PC-9 (cell line): ENCODE measurements at regions of chr17 and their contacts with region 1.

Region 1: DNA sequence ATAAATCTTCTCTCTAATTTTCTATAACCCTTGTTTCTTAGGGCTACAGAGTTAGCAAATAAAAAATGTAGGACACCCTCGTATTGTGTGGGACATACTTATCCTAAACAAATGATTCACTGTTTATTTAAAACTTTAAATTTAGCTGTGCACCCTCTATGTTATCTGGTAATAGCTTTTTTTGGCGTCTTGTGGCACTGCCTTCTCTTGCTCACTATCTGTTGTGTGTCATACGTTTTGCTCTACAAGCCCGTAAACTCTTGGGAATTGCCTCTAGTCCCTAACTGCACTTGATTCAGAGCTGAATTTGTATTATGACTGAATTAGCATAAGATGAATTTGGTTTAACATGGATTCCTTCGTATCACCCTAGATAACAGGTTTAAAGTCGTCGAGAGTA is 144.3 kb upstream of the MYOCD start:
- DNase-seq: no peak
- H3K4me3 ChIP-seq: no peak overlapping the region
- H3K27ac ChIP-seq: no peak overlapping the region
- H3K4me1 ChIP-seq: no peaks in the 10 kb centered on the region
- H3K27me3 ChIP-seq: no peaks in the 10 kb centered on the region
- CTCF ChIP-seq: no peak

Region 2: DNA sequence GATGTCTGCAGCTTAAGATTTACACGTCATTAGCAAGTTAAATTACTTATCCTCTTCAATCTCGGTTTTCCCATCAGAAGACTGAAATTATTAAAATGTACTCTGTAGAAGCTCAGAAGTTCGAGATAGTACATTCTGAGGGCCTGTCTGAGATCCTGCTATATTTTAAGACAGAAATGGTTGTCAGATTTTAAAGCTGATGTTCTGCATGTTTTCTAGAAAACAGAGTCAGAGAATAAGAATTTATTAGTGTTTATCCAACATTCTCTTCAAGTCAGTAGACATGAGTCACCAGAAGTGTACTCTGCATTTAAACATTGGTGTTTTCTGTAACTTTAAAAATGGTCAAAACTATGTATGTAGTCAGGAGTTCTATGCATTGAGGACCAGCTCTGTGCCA is 10.9 kb before region 1 on chr17:
- CTCF ChIA-PET with region 1: interaction called, 16 read pairs
- POLR2A ChIA-PET with region 1: no interaction called
- intact Hi-C with region 1: no loop called
- DNase-seq: no peak
- H3K4me3 ChIP-seq: no peak overlapping the region
- H3K27ac ChIP-seq: no peak overlapping the region
- H3K4me1 ChIP-seq: no peaks in the 10 kb centered on the region
- H3K27me3 ChIP-seq: no peaks in the 10 kb centered on the region; the same call in 1 of the 2 replicates
- CTCF ChIP-seq: no peak

Region 3: DNA sequence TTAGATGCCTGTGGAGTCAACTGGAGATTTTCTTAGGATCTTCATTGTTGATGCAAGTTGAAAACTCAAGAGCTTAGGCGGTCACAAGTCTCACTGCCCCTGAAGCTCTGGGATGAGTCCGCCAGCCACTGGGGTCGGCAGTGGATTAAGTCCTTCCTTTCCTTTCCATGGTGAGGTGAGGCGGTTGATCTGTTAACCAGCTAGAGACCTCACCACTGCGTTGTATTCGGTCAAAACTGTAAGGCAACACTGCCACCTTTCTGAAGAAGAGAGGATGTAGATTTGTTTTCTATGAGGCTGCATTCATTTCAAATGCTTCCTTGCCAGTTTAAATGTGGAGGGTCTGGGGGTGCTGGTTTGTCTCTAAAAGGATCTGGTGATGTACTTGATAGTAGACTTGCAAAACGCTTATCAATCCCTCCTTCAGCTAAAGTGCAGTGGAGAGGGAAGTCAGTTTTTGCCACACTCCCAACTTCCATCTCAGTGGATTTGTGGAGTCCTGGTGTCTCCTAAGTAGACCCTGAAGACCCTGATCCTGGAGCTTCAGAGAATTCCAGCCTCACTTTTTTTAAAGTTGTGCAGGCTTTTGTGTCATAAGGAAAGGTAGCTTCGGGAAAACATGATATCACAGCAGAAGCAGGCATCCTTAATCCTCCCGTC is 146.0 kb after region 1 on chr17:
- CTCF ChIA-PET with region 1: no interaction called
- POLR2A ChIA-PET with region 1: no interaction called
- intact Hi-C with region 1: no loop called
- DNase-seq: no peak
- H3K4me3 ChIP-seq: no peak overlapping the region
- H3K27ac ChIP-seq: no peak overlapping the region
- H3K4me1 ChIP-seq: no peaks in the 10 kb centered on the region
- H3K27me3 ChIP-seq: peaks cover 9% of the 10 kb centered on the region
- CTCF ChIP-seq: peak; percentile 18; the same call in 1 of the 2 replicates